ENCODE measurements at regions of chr12 and their contacts with region 1.

Region 1: GRCh38 chr12:48924617-48925303 is 532 bp downstream of the FKBP11 start:
- DNase-seq: peak; percentile 38
- H3K4me3 Mint-ChIP-seq: peak overlapping the region; percentile 89
- H3K27ac Mint-ChIP-seq: peak overlapping the region; percentile 81
- H3K4me1 Mint-ChIP-seq: peaks cover 47% of the 10 kb centered on the region
- H3K27me3 Mint-ChIP-seq: no peaks in the 10 kb centered on the region

Region 2: DNA sequence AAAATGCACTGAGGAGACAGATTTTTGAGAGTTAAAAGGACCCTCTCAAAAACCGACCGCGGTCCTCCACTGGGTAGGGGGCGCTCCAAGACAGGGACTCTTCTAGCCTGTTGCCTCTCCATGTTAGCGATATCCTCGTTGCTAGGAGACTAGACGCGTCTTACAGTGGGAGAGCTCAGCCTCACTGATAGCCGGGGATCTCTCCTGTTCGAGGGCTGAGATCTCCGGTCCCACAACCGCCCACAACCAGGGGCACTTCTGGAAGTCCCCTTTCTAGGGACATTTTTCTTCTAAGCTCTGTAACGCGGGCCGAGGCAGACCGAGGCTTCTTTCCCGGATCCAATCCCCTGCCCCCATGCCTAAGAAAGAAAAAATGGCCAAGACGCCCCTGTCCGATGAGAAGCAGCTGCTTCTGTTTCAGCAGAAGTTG is 20.8 kb before region 1 on chr12:
- intact Hi-C with region 1: loop called (anchors 1 kb)
- DNase-seq: peak; percentile 70
- H3K4me3 Mint-ChIP-seq: peak overlapping the region; percentile 68
- H3K27ac Mint-ChIP-seq: peak overlapping the region; percentile 71
- H3K4me1 Mint-ChIP-seq: peaks cover 14% of the 10 kb centered on the region
- H3K27me3 Mint-ChIP-seq: peaks cover 8% of the 10 kb centered on the region

Region 3: GRCh38 chr12:48957141-48958048 is 32.6 kb after region 1 on chr12 and contains the start of gene ARF3:
- intact Hi-C with region 1: loop called (anchors 1 kb)
- DNase-seq: peak; percentile 91
- H3K4me3 Mint-ChIP-seq: peak within 1 kb of the TSS; percentile 94
- H3K27ac Mint-ChIP-seq: peak within 1 kb of the TSS; percentile 94
- H3K4me1 Mint-ChIP-seq: peaks cover 46% of the 10 kb centered on the region
- H3K27me3 Mint-ChIP-seq: peaks cover 33% of the 10 kb centered on the region
- total RNA-seq, gene ARF3: 116 and 117 TPM in 2 replicates

Region 4: DNA sequence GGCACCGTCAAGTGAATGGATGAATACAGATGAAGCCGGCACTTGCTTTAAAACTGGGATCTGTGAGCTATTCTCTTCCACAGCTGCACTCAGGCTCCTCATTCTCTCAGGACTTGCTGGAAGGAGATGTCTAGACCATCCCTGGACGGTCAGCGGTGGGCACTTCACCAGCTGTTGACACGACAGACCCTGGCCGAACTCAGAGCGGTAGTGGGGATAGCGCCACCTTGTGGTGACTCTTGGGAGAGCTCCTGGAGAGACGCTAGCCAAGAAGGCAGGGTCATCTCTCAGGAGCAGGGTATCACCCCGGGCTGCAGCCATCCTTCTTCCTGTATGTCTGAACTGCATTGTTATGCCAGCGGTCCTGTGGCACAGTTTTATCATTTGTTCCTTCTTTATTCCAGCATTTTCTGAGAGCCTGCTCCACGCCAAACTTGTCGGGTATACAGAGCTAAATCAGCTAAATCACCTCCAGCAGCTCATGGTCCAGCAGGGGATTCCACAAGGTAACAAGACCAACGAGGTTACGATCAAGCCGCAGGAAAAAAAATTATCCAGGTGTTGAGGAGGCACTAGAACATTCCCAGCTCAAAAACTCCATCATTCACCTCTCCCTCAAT is 63.4 kb after region 1 on chr12:
- intact Hi-C with region 1: loop called (anchors 1 kb)
- DNase-seq: peak; percentile 59
- H3K4me3 Mint-ChIP-seq: no peak overlapping the region
- H3K27ac Mint-ChIP-seq: no peak overlapping the region
- H3K4me1 Mint-ChIP-seq: peaks cover 10% of the 10 kb centered on the region
- H3K27me3 Mint-ChIP-seq: peaks cover 76% of the 10 kb centered on the region

Measured in activated T-helper 1 cell treated with anti-CD3 and anti-CD28 coated beads, Interleukin-12 subunit alpha, Interleukin-12 subunit beta, Interleukin-2, Interleukin-4 antibody, amounts not matched to agents 30 ng/mL and 10 ng/mL and 1 ng/mL, durations not matched to agents 14 hours and 24 hours and 36 hours (primary cell).